ENCODE measurements at regions of chr22 and their contacts with region 1.

Region 1: DNA sequence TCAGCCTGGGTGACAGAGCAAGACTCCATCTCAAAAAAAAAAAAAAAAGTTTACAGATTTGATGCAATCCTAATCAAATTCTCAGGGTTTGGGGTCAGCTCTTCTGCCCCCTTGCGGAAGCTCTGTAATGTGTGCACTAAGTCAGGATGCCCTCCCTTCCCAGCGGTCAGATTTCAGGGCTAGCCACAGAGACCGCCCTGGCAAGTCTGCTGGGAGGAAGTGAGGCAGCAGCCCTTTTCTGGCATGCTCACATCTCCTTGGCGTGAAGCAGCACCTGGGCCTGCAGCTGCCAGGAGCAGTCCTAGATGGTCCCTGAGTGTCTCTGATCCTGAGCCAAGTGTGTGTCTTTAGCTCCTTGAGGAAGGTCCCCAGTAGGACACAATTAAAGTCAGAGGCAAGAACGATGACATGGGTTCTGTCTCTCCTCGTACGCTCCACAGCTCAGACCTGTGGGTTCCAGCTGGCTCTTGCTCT is 10.9 kb upstream of the APOBEC3C start:
- DNase-seq: peak; percentile 89 to 94
- H3K4me3 ChIP-seq: no peak overlapping the region
- H3K27ac ChIP-seq: peak overlapping the region; percentile 20; the same call in 1 of the 2 replicates
- H3K4me1 ChIP-seq: peaks cover 11% of the 10 kb centered on the region
- H3K27me3 ChIP-seq: no peaks in the 10 kb centered on the region
- CTCF ChIP-seq: peak; percentile 95

Region 2: GRCh38 chr22:38953577-38954413 is 49.4 kb before region 1 on chr22:
- CTCF ChIA-PET with region 1: interaction called, 21 read pairs
- POLR2A ChIA-PET with region 1: no interaction called
- intact Hi-C with region 1: no loop called
- DNase-seq: peak; percentile 48 to 76
- H3K4me3 ChIP-seq: no peak overlapping the region
- H3K27ac ChIP-seq: no peak overlapping the region
- H3K4me1 ChIP-seq: peaks cover 26% of the 10 kb centered on the region
- H3K27me3 ChIP-seq: no peaks in the 10 kb centered on the region
- CTCF ChIP-seq: no peak

Region 3: DNA sequence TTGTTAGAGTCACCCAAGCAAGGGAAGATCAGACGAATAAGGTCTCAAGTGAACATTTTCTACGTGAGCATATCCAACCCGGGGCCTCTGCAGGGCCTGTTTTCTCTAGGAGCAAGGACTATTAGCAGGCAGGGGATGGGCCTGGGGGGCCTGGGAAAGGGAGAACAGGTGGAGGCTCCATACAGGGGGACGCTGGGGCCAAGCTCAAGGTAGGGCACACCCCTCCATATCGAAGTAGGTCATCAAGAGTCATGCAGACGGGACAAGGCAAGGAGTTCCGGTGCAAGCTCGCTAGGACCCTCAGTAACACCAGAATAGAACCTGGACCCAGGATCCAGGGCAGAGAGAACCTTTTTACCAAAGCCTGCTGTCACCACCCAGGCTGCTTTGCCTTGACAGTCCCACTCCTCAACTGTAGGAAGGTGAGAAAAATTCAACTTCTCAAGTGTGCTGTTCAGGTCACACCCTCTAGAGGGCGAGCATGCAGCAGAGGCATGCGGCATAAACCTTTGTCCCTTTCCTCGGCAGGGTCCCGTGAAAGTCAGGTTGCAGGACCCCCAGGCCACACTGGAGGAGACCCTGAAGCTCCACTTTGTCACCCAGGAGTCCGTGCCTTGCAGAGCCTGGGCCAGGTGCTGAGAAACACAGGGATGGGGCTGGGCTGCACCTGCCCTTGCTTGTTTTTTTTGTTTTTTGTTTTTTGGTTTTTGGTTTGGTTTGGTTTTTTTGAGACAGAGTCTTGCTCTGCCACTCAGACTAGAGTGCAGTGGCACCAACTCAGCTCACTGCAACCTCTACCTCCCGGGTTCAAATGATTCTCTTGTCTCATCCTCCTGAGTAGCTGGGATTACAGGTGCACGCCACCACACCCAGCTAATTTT is 29.7 kb before region 1 on chr22:
- CTCF ChIA-PET with region 1: interaction called, 8 read pairs
- POLR2A ChIA-PET with region 1: no interaction called
- intact Hi-C with region 1: loop called (anchors 1 kb)
- DNase-seq: peak in 1 of 2 experiments; percentile 42
- H3K4me3 ChIP-seq: no peak overlapping the region
- H3K27ac ChIP-seq: no peak overlapping the region
- H3K4me1 ChIP-seq: no peaks in the 10 kb centered on the region
- H3K27me3 ChIP-seq: no peaks in the 10 kb centered on the region
- CTCF ChIP-seq: peak; percentile 99

Region 4: GRCh38 chr22:39028281-39028680 is 25.1 kb after region 1 on chr22:
- CTCF ChIA-PET with region 1: no interaction called
- POLR2A ChIA-PET with region 1: no interaction called
- intact Hi-C with region 1: no loop called
- DNase-seq: no peak
- H3K4me3 ChIP-seq: no peak overlapping the region
- H3K27ac ChIP-seq: no peak overlapping the region
- H3K4me1 ChIP-seq: peaks cover 7% of the 10 kb centered on the region; the same call in 1 of the 2 replicates
- H3K27me3 ChIP-seq: no peaks in the 10 kb centered on the region
- CTCF ChIP-seq: no peak

Measured in PC-9 (cell line).